ENCODE measurements at regions of chr9 and their contacts with region 1.

Region 1: DNA sequence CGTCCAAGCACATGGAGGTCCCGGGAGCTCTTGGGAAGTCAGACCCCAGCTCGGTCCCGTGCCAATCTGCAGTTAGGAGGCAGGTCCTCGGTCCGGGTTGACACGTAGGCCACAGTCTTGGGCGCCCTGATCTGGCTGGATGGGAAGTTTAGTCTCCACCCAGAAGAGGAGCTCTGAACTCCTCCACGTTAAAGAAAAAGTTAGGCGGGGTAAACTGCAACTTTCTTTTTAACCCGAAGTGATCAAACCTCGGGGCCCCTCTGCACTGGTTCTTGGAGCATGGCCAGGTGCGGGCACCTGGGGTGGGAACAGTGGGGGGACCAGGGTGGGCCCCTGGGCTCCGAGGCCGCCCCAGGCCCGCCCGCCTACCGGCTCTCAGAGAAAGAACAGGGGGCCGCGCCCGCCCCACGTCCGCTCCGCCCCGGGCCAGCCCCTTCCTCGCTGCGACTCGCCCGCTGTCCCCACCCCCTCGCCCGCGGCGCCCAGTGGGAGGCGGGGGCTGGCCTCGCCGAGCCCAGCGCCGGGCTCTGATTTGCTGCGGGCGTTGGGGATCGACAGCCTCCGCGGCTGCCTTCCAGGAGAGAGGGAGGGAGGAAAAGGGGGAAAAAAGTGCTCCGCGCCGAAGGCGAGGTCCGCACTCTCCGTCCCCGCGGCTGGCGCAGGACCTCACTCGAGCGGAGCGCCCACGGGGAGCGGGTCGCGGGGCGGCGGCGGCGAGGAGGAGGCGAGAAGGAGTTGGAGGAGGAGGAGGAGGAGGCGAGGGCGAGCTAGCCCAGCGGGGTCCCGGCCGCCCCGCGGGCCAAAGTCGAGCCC is at the start of gene COL5A1:
- DNase-seq: no peak
- H3K4me3 ChIP-seq: peak within 1 kb of the TSS; percentile 66 to 95
- H3K27ac ChIP-seq: peak within 1 kb of the TSS; percentile 90
- H3K4me1 ChIP-seq: peaks cover 23% of the 10 kb centered on the region
- H3K27me3 ChIP-seq: no peaks in the 10 kb centered on the region
- CTCF ChIP-seq: peak in 1 of 3 experiments; percentile 49
- POLR2A ChIP-seq: peak in 1 of 2 donors; percentile 79
- total RNA-seq, gene COL5A1: 36.6 TPM

Region 2: GRCh38 chr9:134455934-134456739 is 185.2 kb before region 1 on chr9:
- intact Hi-C with region 1: loop called (anchors 5 kb)
- DNase-seq: no peak
- H3K4me3 ChIP-seq: peak overlapping the region; percentile 35 to 47
- H3K27ac ChIP-seq: peak overlapping the region; percentile 97
- H3K4me1 ChIP-seq: peaks cover 48% of the 10 kb centered on the region
- H3K27me3 ChIP-seq: no peaks in the 10 kb centered on the region
- CTCF ChIP-seq: no peak
- POLR2A ChIP-seq: no peak

Region 3: GRCh38 chr9:134475011-134475790 is 166.2 kb before region 1 on chr9:
- intact Hi-C with region 1: loop called (anchors 5 kb)
- DNase-seq: no peak
- H3K4me3 ChIP-seq: no peak overlapping the region
- H3K27ac ChIP-seq: peak overlapping the region; percentile 78
- H3K4me1 ChIP-seq: peaks cover 48% of the 10 kb centered on the region
- H3K27me3 ChIP-seq: no peaks in the 10 kb centered on the region
- CTCF ChIP-seq: no peak
- POLR2A ChIP-seq: no peak

Region 4: DNA sequence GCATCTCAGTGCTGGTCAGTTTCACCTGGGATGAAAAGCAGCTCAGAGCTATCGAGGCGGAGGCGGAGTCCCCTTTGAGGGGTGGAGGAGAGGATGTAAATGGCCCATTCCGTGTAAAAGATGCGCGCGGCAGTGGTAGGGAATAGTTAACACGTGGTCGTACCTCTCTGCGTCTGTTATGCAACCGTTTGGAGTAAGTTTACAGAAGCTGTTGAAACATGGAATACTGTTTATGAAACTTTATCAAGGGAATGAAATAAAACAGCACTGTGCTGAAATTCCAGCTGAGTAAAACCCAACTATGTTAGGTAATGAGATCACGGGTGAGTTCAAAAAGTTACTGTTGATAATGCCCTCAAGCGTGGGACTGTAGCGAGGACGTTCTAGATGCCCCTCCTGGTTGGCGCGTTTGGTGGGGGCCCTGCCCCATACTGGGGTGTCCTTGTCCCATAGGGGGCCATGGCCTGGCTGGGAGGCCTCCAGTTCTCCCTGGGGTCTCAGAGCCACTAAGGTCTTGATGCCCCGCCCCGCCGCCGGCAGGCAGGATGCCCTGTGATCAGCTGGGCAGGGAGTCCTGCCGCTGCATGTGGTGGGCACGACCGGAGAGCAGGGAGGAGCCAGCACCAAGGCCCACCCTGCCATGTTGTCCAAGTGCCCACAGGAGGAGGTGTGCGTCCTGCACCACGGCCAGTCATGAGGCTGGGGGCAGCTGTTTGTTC is 91.2 kb after region 1 on chr9:
- intact Hi-C with region 1: loop called (anchors 2 kb)
- DNase-seq: no peak
- H3K4me3 ChIP-seq: no peak overlapping the region
- H3K27ac ChIP-seq: peak overlapping the region; percentile 81
- H3K4me1 ChIP-seq: peaks cover 65% of the 10 kb centered on the region
- H3K27me3 ChIP-seq: no peaks in the 10 kb centered on the region
- CTCF ChIP-seq: no peak
- POLR2A ChIP-seq: no peak